ENCODE measurements at regions of chr1 and their contacts with region 1.

Region 1: DNA sequence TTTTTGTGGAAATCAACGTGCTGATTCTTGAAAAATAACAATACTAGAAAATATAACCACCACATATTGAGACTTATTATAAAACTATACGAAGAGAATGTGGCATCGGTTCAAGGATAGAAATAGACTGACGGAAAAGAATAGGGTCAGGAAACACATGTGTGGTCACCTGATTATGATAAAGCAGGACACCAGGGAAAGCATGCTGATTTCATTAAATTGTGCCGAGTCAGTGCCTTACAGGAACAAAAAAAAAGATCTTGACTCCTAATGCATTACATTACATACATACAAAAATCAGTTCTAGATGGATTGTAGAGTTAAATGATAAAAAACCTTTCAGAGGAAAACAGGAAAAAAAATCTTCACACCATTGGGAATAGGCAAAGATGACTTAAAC is 43.5 kb upstream of the SERPINC1 start:
- DNase-seq: no peak
- H3K4me3 Mint-ChIP-seq: no peak overlapping the region
- H3K27ac Mint-ChIP-seq: no peak overlapping the region
- H3K4me1 Mint-ChIP-seq: no peaks in the 10 kb centered on the region
- H3K27me3 Mint-ChIP-seq: no peaks in the 10 kb centered on the region
- CTCF ChIP-seq: no peak

Region 2: DNA sequence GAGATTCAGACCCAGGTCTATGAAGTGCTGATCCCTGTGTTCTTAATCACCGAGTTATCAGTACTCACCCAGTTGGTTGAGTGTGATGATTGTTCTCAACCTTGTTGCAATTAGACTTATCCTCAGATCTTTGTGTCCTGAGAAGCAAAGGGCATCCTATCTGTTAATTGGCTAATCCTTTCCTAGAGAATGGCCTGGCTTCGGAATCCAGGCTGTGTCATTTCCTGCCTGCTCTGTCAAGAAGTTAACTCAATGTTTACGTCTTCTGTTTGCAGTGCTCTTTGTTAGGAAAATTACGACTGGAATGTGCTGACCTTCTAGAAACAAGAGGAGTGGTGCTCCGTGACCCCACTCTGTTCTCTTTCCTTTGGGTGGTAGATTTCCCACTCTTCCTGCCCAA is 107.6 kb before region 1 on chr1:
- CTCF ChIA-PET with region 1: no interaction called
- intact Hi-C with region 1: no loop called
- DNase-seq: no peak
- H3K4me3 Mint-ChIP-seq: no peak overlapping the region
- H3K27ac Mint-ChIP-seq: no peak overlapping the region
- H3K4me1 Mint-ChIP-seq: no peaks in the 10 kb centered on the region
- H3K27me3 Mint-ChIP-seq: no peaks in the 10 kb centered on the region
- CTCF ChIP-seq: no peak

Region 3: DNA sequence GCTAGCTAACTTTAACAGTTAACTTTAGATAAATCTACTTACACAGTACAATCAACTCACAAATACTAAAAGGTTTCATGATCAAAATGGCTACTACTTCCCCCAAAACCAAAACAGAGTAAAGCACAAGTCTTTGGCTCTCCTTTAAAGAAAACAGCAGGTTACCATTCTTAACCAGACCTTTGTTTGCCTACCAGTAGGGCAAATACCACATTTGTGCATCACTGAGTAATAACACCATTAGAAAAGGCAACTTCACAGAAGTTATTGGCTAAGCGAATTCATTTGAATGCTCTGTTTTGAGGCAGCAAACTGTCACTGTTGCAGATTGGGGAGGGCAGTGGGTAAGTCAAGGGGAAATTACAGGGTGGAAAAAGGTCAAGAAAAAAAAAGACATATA is 26.2 kb before region 1 on chr1:
- CTCF ChIA-PET with region 1: no interaction called
- intact Hi-C with region 1: loop called (anchors 5 kb)
- DNase-seq: no peak
- H3K4me3 Mint-ChIP-seq: no peak overlapping the region
- H3K27ac Mint-ChIP-seq: no peak overlapping the region
- H3K4me1 Mint-ChIP-seq: no peaks in the 10 kb centered on the region
- H3K27me3 Mint-ChIP-seq: no peaks in the 10 kb centered on the region
- CTCF ChIP-seq: no peak